Posterior cingulate gyrus (tissue), 11 donors: ENCODE measurements at regions of chr12 and their contacts with region 1.

Region 1: DNA sequence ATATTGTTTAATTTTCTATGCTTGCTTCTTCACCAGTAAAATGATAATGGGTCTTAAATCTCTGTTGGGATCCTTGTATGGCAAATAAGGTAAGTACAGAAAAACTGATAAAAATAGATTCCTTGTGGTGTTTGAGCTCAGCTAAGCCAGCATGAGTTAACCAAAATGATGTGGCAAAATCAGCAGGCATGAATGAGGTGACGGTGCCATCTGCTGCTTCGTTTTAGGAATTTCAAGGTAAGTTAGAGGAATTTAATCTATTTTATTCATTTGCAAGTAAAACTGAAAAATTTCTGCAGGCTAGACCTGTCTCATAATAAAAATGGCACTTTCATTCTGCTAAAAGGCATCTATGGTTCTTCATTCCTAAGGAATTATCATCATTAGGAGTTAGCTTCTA is 10.0 kb upstream of the CLEC7A start:
- DNase-seq: peak in 6 of 10 donors; percentile 16 to 84 (median 32)

Region 2: DNA sequence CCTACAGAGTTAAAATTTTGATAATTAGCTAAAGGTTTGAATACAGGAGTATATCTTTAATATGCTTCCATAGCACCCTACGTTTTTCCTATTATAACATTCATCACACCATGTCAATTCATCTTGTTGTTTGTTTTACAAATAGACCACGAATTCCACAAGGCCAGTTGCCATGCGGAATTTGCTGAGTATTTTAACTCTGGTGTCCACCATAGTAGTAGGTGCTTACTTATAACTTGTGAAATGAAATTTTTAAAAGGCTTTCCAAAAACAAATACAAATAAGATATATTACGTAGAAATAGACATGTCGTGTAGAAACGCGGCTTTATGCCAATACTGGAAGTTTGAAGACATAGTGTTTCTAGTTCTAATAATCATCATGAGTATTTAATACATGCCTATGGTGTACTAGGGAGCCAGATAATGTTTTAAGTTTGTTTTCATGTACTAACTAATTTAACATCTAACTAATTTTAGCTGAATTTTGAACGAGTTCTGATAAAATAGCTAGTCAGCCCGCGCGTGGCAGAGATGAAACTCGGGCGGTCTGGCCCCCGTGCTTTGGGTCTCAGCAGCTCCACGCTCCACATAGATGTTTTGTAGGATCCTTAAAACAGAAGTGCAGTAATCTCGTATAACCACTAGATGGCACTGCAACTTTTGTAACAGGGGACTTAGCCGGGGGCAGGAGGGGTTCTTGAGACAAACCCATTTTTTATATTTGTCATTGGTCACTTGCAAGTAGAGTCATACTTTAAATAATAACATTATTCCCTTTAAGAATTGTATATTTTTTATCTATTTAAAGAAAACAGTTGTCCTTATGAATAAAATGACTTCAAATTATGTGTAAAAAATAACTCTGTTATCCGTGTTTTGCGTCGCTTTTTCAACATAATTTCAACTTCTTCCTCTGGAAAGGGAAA is 389.5 kb before region 1 on chr12:
- intact Hi-C with region 1: loop called (anchors 2 kb)
- DNase-seq: peak in 4 of 10 donors; percentile 29 to 81 (median 74)

Region 3: DNA sequence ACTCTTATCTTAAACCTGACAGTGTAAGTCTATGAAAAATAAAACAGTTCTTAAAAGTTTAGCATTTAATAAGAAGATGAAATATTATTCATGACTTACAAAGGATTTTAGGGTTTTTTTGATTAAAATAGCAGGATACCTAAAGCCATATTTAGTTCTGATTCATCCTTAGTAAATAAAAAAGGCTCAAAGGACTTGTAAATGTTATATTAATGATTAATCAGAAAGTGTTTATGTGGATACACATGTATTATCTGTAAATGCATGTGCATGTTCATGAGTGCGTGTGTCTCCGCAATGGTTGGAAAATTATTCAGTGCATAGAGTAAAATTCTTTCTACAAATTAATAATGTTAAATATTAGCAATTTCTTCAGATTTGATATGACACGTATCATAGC is 308.3 kb before region 1 on chr12:
- intact Hi-C with region 1: no loop called
- DNase-seq: no peak

Region 4: GRCh38 chr12:10012630-10013330 is 127.2 kb before region 1 on chr12:
- intact Hi-C with region 1: loop called (anchors 2 kb)
- DNase-seq: no peak

Region 5: DNA sequence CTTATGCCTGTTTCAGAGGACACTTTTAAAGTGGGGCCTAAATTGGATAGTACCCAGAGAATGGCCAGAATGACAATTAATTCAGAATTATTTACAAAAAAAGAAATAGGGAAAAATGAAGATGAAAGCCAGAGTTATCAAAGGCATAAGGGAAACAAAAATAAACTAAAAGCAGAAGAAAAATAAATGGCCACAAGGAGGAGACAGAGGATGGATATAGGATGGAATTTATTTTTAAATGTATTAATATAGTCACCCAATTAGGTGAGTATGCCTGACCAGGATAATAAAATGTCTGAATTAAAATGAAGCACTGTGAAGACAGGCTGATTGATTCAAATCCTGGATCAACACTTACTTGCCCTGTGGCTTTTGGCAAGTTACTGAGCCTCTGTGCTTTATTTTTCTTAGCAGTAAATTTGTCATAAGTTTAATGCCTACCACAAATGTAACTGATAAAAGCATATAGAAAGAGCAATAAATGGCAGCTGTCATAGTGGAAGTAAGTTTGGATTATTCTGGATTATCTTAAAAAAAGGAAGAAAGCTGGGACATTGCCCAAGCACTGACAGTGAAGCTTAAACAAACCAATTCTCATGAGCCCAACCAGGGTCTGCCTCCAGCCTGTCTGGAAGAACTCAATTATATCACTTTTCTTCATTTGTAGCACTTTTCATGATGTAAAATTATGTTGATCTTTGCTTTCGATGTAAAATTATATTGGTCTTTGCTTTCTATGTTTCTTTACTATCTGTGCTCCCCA is 106.0 kb before region 1 on chr12:
- intact Hi-C with region 1: loop called (anchors 5 kb)
- DNase-seq: no peak